Activated CD4-positive, alpha-beta memory T cell treated with anti-CD3 and anti-CD28 coated beads for 36 hours (primary cell): ENCODE measurements at regions of chr12 and their contacts with region 1.

Region 1: GRCh38 chr12:67827820-67828383 is 161.3 kb upstream of the IFNG-AS1 start:
- DNase-seq: peak; percentile 82
- H3K4me3 Mint-ChIP-seq: peak overlapping the region; percentile 70
- H3K27ac Mint-ChIP-seq: peak overlapping the region; percentile 84
- H3K4me1 Mint-ChIP-seq: peaks cover 24% of the 10 kb centered on the region
- H3K27me3 Mint-ChIP-seq: no peaks in the 10 kb centered on the region

Region 2: DNA sequence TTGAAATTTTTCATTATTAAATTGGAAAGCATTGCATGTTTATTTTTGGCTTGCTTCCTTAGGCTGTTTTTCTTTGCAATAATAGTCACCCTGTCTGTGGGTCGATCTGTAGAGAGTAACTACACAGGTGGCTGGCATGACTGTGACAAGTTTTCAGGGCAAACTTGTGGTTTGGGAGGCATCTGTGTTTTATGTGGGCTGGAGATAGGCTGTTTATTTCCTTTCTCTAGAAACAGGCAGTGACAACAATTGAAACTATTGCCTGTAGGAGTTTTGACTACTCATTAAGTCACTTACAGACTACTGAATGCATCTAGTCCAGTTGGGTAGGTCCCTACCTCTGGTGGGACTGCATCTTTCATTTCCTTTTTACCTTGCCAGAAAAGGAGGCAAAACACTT is 23.7 kb before region 1 on chr12:
- CTCF ChIA-PET with region 1: interaction called, 3 read pairs
- POLR2A ChIA-PET with region 1: no interaction called
- intact Hi-C with region 1: loop called (anchors 1 kb)
- DNase-seq: peak; percentile 80
- H3K4me3 Mint-ChIP-seq: no peak overlapping the region
- H3K27ac Mint-ChIP-seq: no peak overlapping the region
- H3K4me1 Mint-ChIP-seq: peaks cover 31% of the 10 kb centered on the region
- H3K27me3 Mint-ChIP-seq: no peaks in the 10 kb centered on the region

Region 3: DNA sequence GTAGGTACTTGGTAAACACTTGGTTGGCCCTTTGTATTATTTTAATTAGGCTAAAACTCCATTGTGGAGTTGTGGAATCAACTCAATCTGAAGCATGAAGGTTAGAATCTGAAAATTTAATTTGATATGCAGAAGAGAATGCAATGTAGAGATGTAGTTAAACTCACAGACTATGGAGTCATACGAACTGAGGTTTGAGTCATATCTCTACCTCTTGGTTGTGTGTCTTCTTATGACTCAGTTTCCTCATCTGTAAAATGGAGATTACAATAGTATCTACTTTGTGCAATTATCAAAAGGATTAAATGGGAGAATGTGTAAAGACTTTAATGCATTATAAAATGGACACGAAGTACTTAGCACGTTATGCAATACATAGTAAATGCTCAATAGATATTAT is 15.4 kb after region 1 on chr12:
- CTCF ChIA-PET with region 1: no interaction called
- POLR2A ChIA-PET with region 1: no interaction called
- intact Hi-C with region 1: loop called (anchors 1 kb)
- DNase-seq: no peak
- H3K4me3 Mint-ChIP-seq: no peak overlapping the region
- H3K27ac Mint-ChIP-seq: no peak overlapping the region
- H3K4me1 Mint-ChIP-seq: peaks cover 3% of the 10 kb centered on the region
- H3K27me3 Mint-ChIP-seq: no peaks in the 10 kb centered on the region

Region 4: DNA sequence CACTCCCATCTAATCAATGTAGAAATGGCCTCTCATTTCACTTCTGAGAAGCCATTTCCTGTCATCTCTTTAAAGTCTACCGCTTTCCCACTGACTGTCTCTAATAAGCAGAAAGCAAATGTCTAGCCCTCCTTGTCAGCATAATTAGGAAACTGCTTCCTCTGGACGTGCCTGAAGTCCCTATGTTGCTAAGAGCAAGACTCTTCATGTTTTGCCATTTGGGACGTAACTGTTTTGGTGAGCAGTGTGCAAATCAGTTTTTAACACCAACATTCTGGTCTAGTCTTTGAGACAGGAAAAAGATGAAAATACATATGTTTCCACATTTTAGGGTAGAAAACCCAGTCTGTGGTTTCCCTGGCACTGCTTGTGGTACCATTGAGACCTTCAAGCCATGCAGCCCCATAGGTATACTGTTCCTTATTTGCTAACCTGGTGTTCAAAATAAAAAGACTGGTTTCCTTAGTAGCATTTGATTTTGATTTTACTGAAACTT is 309.5 kb after region 1 on chr12:
- CTCF ChIA-PET with region 1: no interaction called
- POLR2A ChIA-PET with region 1: no interaction called
- intact Hi-C with region 1: loop called (anchors 5 kb)
- DNase-seq: peak; percentile 25
- H3K4me3 Mint-ChIP-seq: no peak overlapping the region
- H3K27ac Mint-ChIP-seq: peak overlapping the region; percentile 75
- H3K4me1 Mint-ChIP-seq: peaks cover 59% of the 10 kb centered on the region
- H3K27me3 Mint-ChIP-seq: no peaks in the 10 kb centered on the region